ENCODE measurements at regions of chr3 and their contacts with region 1.

Region 1: GRCh38 chr3:162998205-162998604 is 1501.6 kb downstream of the OTOL1 start:
- DNase-seq: no peak
- H3K4me3 ChIP-seq: no peak overlapping the region
- H3K27ac ChIP-seq: no peak overlapping the region
- H3K4me1 ChIP-seq: no peaks in the 10 kb centered on the region
- H3K27me3 ChIP-seq: no peaks in the 10 kb centered on the region
- CTCF ChIP-seq: no peak

Region 2: GRCh38 chr3:163011590-163011989 is 13.4 kb after region 1 on chr3:
- CTCF ChIA-PET with region 1: no interaction called
- POLR2A ChIA-PET with region 1: no interaction called
- intact Hi-C with region 1: loop called (anchors 1 kb)
- DNase-seq: no peak
- H3K4me3 ChIP-seq: no peak overlapping the region
- H3K27ac ChIP-seq: no peak overlapping the region
- H3K4me1 ChIP-seq: no peaks in the 10 kb centered on the region
- H3K27me3 ChIP-seq: no peaks in the 10 kb centered on the region
- CTCF ChIP-seq: no peak

Region 3: GRCh38 chr3:163614886-163615285 is 616.7 kb after region 1 on chr3:
- CTCF ChIA-PET with region 1: no interaction called
- POLR2A ChIA-PET with region 1: no interaction called
- intact Hi-C with region 1: no loop called
- DNase-seq: no peak
- H3K4me3 ChIP-seq: no peak overlapping the region
- H3K27ac ChIP-seq: peak overlapping the region; percentile 99
- H3K4me1 ChIP-seq: peaks cover 28% of the 10 kb centered on the region
- H3K27me3 ChIP-seq: no peaks in the 10 kb centered on the region
- CTCF ChIP-seq: no peak

Region 4: DNA sequence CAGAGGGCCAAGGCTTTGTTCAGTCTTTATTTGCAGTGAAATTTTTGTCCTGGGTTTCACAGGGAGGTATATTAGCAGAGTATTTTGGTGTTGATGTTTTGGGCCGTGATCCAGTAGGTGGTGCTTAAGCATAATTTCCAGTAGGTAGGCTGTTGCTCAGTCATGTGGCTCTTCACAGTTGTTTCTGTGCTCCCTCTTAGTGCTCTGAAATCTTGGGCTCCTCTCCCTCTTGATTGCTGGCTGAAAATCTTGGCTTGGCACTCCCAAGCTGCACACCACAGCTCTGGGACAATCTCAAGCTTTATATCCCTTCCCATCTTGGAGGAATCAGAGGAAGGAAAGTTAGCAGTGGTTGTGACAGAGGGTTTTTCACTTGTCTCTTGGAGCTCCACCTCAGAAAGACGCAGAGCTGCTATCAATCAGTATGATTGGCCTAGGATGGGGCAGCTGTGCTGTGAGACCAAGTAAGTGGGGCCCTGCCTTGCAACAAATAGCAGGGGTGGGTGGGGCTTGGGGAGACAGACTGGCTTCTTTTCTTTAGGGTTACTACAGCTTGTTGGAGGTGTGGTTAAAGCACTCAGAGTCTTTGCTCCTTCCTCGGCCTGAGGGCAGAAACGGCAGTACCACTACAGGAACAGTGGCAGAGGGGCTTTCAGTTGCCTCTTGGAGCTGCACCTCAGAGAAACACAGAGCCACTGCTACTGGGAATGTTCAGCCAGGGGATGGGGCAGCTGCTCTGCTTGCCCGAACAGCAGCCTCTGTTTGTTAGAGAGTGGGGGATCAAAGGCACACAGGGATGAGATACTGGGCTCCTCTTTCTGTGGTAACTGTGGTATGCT is 1453.1 kb after region 1 on chr3:
- CTCF ChIA-PET with region 1: no interaction called
- POLR2A ChIA-PET with region 1: no interaction called
- intact Hi-C with region 1: no loop called
- DNase-seq: no peak
- H3K4me3 ChIP-seq: no peak overlapping the region
- H3K27ac ChIP-seq: no peak overlapping the region
- H3K4me1 ChIP-seq: no peaks in the 10 kb centered on the region
- H3K27me3 ChIP-seq: no peaks in the 10 kb centered on the region
- CTCF ChIP-seq: no peak